Heart right ventricle (tissue), 16 donors: ENCODE measurements at regions of chr6 and their contacts with region 1.

Region 1: GRCh38 chr6:31619805-31620585 is 520 bp upstream of the PRRC2A start:
- DNase-seq: peak; percentile 97 to 98
- ATAC-seq: peak; percentile 93 to 97 (median 96)
- H3K4me3 ChIP-seq: peak overlapping the region; percentile 68 to 99 (median 80)
- H3K27ac ChIP-seq: peak overlapping the region; percentile 89 to 99 (median 96)
- H3K4me1 ChIP-seq: peaks cover 0 to 24% (median 21%) of the 10 kb centered on the region in 9 donors
- H3K27me3 ChIP-seq: no peaks in the 10 kb centered on the region
- CTCF ChIP-seq: no peak

Region 2: DNA sequence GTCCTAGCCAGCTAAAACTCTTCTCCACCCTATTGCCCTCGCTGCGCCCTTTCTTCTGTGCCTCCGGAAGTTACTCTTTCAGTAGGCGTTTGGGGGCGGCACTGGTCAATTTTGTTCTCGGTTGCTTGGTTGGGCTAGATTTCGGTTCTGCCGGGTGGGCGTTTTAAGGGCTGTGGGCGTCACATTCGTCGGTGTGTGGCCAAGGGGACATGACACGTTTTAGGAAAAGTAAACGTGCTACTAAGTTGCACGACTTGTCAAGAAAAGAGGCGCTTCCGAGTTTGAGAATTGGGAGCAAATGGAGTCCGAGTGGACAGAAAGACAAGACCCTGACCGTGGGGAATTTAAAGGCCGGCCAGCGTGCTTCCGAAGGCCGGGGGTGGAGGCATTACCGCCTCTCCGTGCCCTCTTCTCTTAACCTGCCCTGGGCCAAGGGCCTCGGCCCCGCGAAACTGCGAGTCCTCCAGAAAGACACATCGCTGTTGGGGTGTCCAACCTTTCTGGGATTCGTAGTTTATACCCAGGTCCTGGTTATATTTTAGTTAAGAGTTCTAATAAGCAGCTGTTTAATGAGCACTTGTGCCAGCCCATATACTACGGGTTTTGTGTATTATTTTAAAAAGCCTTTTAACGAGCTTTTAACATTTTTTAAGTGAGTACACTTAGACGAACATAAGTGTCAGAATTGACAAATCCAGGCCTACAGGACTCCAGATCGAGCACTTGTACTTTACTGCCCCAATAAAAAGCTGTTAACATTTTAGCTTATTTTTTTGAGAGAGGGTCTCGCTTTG is 33.1 kb after region 1 on chr6:
- intact Hi-C with region 1: loop called in 2 of 10 experiments (anchors 1 to 2 kb)
- DNase-seq: peak; percentile 76 to 94
- ATAC-seq: peak; percentile 69 to 86 (median 82)
- H3K4me3 ChIP-seq: peak overlapping the region; percentile 51 to 93 (median 76)
- H3K27ac ChIP-seq: peak overlapping the region; percentile 85 to 100 (median 98)
- H3K4me1 ChIP-seq: peaks cover 0 to 45% (median 36%) of the 10 kb centered on the region in 9 donors
- H3K27me3 ChIP-seq: no peaks in the 10 kb centered on the region
- CTCF ChIP-seq: peak in 3 of 9 donors; percentile 14 to 29 (median 19)

Region 3: DNA sequence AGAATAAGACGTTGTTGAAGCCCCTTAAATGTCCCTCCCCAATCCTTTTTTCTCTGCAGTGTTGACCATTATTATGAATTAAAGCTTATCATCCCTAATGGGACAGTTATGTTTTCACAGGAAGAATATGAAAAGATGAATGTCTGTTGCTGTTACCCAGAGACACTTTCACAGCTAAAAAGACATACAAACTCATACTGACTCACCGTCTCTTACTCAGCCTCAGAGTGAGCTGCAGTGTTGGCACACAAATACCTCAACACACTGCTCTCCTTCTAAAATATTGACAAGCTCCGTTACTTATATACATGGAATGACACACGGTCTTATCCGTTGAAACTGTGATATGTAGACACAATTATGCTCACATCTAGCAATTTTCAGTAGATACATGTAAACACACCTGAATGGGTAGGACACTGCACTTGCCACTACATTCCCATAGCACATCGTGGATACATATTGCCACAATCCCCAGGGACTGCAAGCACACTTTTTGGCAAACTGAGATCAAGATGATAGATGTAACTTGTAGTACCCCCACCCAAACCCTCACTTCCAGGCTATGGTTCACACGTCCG is 132.8 kb after region 1 on chr6:
- intact Hi-C with region 1: no loop called
- DNase-seq: no peak
- ATAC-seq: no peak
- H3K4me3 ChIP-seq: no peak overlapping the region
- H3K27ac ChIP-seq: no peak overlapping the region
- H3K4me1 ChIP-seq: no peaks in the 10 kb centered on the region
- H3K27me3 ChIP-seq: no peaks in the 10 kb centered on the region
- CTCF ChIP-seq: no peak